ENCODE measurements at regions of chr12 and their contacts with region 1.

Region 1: GRCh38 chr12:104456417-104456949 is at the start of gene CHST11:
- DNase-seq: peak; percentile 67 to 85
- ATAC-seq: peak; percentile 71 to 81 (median 81)
- H3K4me3 ChIP-seq: peak within 1 kb of the TSS; percentile 96
- H3K4me3 Mint-ChIP-seq: peak within 1 kb of the TSS; percentile 99
- H3K27ac ChIP-seq: peak within 1 kb of the TSS; percentile 76
- H3K27ac Mint-ChIP-seq: peak within 1 kb of the TSS; percentile 91 to 93
- H3K4me1 ChIP-seq: peaks cover 31% of the 10 kb centered on the region
- H3K4me1 Mint-ChIP-seq: peaks cover 39 to 52% of the 10 kb centered on the region in 2 donors
- H3K27me3 ChIP-seq: no peaks in the 10 kb centered on the region
- H3K27me3 Mint-ChIP-seq: peaks cover 0 to 5% of the 10 kb centered on the region in 2 donors
- CTCF ChIP-seq: no peak
- total RNA-seq, gene CHST11: 85.3 to 118 (median 96.1) TPM

Region 2: DNA sequence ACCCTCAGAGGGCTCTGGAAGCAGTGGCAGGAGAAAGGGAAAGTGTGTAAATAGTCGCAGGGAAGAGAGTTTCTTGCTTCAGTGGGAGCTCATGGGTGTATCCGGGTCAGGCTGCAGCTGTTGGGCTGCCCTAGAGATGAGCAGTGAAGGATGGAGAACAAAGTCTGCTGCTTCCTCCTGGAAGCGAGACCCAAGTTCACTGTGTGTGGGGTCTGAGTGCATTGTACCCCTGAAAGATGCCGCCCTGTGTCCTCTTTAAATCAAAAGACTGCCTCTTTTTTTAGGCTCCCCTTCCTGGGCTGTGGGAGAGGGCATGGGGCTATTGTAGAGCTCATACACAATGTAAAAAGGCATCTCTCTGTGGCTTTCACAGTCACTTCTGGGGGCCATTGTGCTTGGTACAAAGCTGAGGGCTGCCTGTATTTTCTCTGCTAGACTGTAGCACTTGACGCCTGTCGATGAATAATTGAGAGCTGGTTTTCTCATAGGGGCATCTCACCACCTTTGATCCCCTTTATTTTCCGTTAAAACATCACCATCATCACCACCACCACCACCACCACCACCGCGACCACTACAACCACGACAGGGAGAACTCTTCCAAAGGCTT is 17.0 kb after region 1 on chr12:
- intact Hi-C with region 1: loop called (anchors 2 kb)
- DNase-seq: no peak
- ATAC-seq: peak; percentile 46 to 53 (median 46)
- H3K4me3 ChIP-seq: peak overlapping the region; percentile 0
- H3K4me3 Mint-ChIP-seq: peak overlapping the region; percentile 84
- H3K27ac ChIP-seq: peak overlapping the region; percentile 62
- H3K27ac Mint-ChIP-seq: peak overlapping the region; percentile 91 to 93
- H3K4me1 ChIP-seq: peaks cover 62% of the 10 kb centered on the region
- H3K4me1 Mint-ChIP-seq: peaks cover 83 to 86% of the 10 kb centered on the region in 2 donors
- H3K27me3 ChIP-seq: no peaks in the 10 kb centered on the region
- H3K27me3 Mint-ChIP-seq: no peaks in the 10 kb centered on the region
- CTCF ChIP-seq: no peak

Region 3: GRCh38 chr12:104494137-104494792 is 37.8 kb after region 1 on chr12:
- intact Hi-C with region 1: loop called (anchors 2 kb)
- DNase-seq: peak in 1 of 2 donors; percentile 58
- ATAC-seq: peak; percentile 56 to 62 (median 58)
- H3K4me3 ChIP-seq: peak overlapping the region; percentile 5
- H3K4me3 Mint-ChIP-seq: peak overlapping the region; percentile 54
- H3K27ac ChIP-seq: peak overlapping the region; percentile 71
- H3K27ac Mint-ChIP-seq: peak overlapping the region; percentile 91 to 94
- H3K4me1 ChIP-seq: peaks cover 64% of the 10 kb centered on the region
- H3K4me1 Mint-ChIP-seq: peaks cover 83 to 84% of the 10 kb centered on the region in 2 donors
- H3K27me3 ChIP-seq: no peaks in the 10 kb centered on the region
- H3K27me3 Mint-ChIP-seq: no peaks in the 10 kb centered on the region
- CTCF ChIP-seq: no peak

Region 4: GRCh38 chr12:104671407-104672098 is 215.1 kb after region 1 on chr12:
- intact Hi-C with region 1: loop called (anchors 2 kb)
- DNase-seq: peak; percentile 72 to 88
- ATAC-seq: peak; percentile 90 to 92 (median 91)
- H3K4me3 ChIP-seq: no peak overlapping the region
- H3K4me3 Mint-ChIP-seq: peak overlapping the region; percentile 87
- H3K27ac ChIP-seq: peak overlapping the region; percentile 56
- H3K27ac Mint-ChIP-seq: peak overlapping the region; percentile 85 to 93
- H3K4me1 ChIP-seq: peaks cover 55% of the 10 kb centered on the region
- H3K4me1 Mint-ChIP-seq: peaks cover 55 to 56% of the 10 kb centered on the region in 2 donors
- H3K27me3 ChIP-seq: no peaks in the 10 kb centered on the region
- H3K27me3 Mint-ChIP-seq: no peaks in the 10 kb centered on the region
- CTCF ChIP-seq: no peak

Region 5: DNA sequence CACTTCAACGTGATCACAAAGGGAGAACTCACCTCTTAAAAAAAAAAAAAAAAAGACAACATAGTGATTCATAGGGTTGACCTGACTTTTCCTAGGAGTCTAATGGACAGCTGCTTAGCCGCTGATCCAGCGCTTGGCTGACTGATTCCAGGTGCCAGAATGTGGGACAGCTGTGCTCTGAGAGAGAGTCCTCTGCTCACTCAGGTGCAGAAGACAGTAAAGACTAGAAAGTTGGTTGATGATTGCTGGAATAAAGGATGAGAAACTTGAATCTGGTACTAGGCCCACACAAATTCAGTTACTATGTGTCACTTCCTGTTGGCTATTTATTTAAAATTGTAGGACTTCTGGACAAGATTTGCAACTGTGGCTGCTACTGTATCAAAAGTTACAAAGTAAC is 229.7 kb after region 1 on chr12:
- intact Hi-C with region 1: loop called (anchors 1 kb)
- DNase-seq: no peak
- ATAC-seq: no peak
- H3K4me3 ChIP-seq: no peak overlapping the region
- H3K4me3 Mint-ChIP-seq: peak overlapping the region; percentile 53
- H3K27ac ChIP-seq: no peak overlapping the region
- H3K27ac Mint-ChIP-seq: peak overlapping the region; percentile 93
- H3K4me1 ChIP-seq: peaks cover 86% of the 10 kb centered on the region
- H3K4me1 Mint-ChIP-seq: peaks cover 89 to 94% of the 10 kb centered on the region in 2 donors
- H3K27me3 ChIP-seq: no peaks in the 10 kb centered on the region
- H3K27me3 Mint-ChIP-seq: no peaks in the 10 kb centered on the region
- CTCF ChIP-seq: no peak